CD4-positive, alpha-beta T cell (primary cell): ENCODE measurements at regions of chr17 and their contacts with region 1.

Region 1: GRCh38 chr17:77331301-77331864 is 190.6 kb downstream of the SEC14L1 start:
- DNase-seq: peak; percentile 92 to 99 (median 98)
- ATAC-seq: peak; percentile 84
- H3K4me3 ChIP-seq: peak overlapping the region; percentile 51
- H3K4me3 Mint-ChIP-seq: peak overlapping the region; percentile 90
- H3K27ac ChIP-seq: peak overlapping the region; percentile 47 to 55
- H3K27ac Mint-ChIP-seq: peak overlapping the region; percentile 88
- H3K4me1 ChIP-seq: peaks cover 52% of the 10 kb centered on the region
- H3K4me1 Mint-ChIP-seq: peaks cover 59% of the 10 kb centered on the region
- H3K27me3 ChIP-seq: no peaks in the 10 kb centered on the region
- H3K27me3 Mint-ChIP-seq: no peaks in the 10 kb centered on the region
- CTCF ChIP-seq: peak; percentile 92

Region 2: DNA sequence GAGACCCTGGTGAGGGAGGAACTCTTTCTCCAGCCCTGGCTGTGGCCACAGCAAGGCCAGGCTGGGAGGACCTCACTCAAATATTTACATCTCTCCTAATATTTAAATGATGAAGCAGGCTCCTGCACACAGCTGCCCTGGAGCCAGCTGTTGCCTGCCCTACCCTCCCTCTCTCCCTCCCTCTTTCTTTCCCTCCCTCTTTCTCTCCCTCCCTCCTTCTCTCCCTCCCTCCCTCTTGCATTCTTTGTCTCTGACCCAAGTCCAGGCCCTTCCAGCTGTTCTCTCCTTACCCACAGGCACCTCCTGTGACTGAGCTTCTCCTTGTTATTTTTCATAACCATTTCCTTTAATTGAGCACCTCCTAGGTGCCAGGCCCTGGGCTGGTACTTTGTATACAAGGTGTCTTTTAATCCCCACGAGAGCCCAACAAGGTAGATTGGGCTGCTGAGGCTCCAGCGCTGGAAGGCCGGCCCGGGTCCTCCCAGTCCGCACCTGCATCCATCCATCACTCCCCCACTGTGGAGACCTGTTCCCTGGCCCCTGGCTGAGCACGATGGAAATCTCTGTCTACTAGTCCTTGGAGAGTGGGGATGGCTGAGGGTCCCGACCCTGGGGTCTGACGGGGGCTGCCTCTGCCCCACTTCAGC is 51.7 kb after region 1 on chr17:
- CTCF ChIA-PET with region 1: interaction called, 40 read pairs
- POLR2A ChIA-PET with region 1: interaction called, 91 read pairs
- intact Hi-C with region 1: no loop called
- DNase-seq: no peak
- ATAC-seq: peak; percentile 9
- H3K4me3 ChIP-seq: peak overlapping the region; percentile 41
- H3K4me3 Mint-ChIP-seq: peak overlapping the region; percentile 50
- H3K27ac ChIP-seq: peak overlapping the region in 1 of 2 donors; percentile 32
- H3K27ac Mint-ChIP-seq: peak overlapping the region; percentile 93
- H3K4me1 ChIP-seq: peaks cover 100% of the 10 kb centered on the region
- H3K4me1 Mint-ChIP-seq: peaks cover 93% of the 10 kb centered on the region
- H3K27me3 ChIP-seq: no peaks in the 10 kb centered on the region
- H3K27me3 Mint-ChIP-seq: no peaks in the 10 kb centered on the region
- CTCF ChIP-seq: no peak

Region 3: DNA sequence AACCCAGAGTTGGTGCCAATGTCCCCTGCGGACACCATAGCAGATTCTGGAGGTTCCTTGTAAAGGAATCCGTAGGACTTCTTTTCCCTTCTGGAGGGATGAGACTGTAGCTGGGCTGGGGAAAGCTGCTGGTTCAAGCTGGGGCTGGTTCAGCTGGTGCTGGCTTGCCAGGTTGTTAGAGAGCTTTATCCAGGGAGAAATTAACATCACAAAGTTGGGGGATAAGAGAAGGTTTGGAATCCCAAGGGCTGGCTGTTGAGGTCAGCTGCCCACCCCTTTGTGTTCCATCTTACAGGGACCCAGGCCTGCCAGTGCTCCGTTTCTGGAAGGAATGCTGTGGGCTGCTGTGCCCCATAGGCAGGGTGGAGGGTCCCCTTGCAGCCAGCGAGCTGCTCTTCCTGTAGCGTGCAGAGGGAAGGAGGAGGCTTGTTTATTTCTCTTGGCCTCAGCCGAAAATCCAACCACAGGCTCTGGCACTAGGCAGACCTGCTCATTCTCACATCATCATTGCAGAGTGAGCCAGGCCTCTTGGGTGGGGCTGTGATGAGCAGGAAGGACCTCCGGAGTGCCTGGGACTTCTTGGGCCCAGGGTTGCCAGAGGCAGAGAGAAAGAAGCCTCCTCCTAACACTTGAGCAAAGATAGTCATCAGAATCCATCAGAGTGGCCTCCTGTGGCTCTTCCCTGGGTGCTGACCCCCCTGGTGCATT is 60.4 kb after region 1 on chr17:
- CTCF ChIA-PET with region 1: interaction called, 12 read pairs
- POLR2A ChIA-PET with region 1: interaction called, 12 read pairs
- intact Hi-C with region 1: no loop called
- DNase-seq: peak in 10 of 14 experiments; percentile 33 to 76 (median 53)
- ATAC-seq: peak; percentile 41
- H3K4me3 ChIP-seq: peak overlapping the region; percentile 19
- H3K4me3 Mint-ChIP-seq: peak overlapping the region; percentile 65
- H3K27ac ChIP-seq: peak overlapping the region; percentile 31
- H3K27ac Mint-ChIP-seq: peak overlapping the region; percentile 90
- H3K4me1 ChIP-seq: peaks cover 91% of the 10 kb centered on the region
- H3K4me1 Mint-ChIP-seq: peaks cover 88% of the 10 kb centered on the region
- H3K27me3 ChIP-seq: no peaks in the 10 kb centered on the region
- H3K27me3 Mint-ChIP-seq: no peaks in the 10 kb centered on the region
- CTCF ChIP-seq: no peak

Region 4: DNA sequence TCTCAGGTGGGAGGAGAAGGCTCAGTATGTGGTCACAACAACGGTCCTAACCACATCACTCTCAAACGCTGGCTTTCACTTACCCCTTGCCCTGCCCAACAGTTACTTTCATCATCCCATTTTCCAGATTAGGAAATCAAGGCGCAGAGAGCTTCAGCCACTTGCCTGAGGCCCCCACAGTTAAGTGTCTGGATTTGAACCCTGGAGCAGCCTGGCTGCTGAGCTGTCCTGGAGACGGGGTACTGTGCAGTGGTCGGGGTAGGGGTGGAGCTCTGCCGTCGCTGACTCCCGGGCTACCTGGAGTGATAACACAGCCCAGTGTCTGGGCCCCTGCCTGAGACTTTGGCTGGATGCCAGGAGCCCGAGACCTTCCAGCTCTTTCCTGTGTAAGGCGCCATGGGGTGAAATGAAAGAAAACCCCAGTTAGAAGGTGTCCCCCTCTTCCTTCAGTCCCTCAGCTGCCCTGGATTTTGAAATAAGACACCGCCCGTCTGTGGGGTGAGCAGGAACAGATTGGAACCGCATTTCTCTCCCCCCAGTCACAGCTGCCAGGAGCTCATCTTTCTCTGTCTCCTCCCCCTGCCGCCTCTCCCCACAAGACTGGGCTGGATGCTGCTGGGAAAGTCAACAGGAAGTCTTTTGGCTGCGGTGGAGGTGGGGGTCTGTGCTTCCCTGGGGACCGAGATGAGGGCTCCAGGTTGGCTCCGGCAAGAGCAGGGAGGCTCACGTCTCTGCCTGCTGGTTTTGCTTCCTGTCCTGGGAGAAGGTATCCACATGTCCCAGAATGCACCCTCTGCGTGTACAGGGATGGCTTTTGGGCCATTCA is 89.6 kb after region 1 on chr17:
- CTCF ChIA-PET with region 1: interaction called, 5 read pairs
- POLR2A ChIA-PET with region 1: interaction called, 66 read pairs
- intact Hi-C with region 1: no loop called
- DNase-seq: peak; percentile 44 to 82 (median 66)
- ATAC-seq: peak; percentile 69
- H3K4me3 ChIP-seq: peak overlapping the region; percentile 31
- H3K4me3 Mint-ChIP-seq: peak overlapping the region; percentile 83
- H3K27ac ChIP-seq: peak overlapping the region; percentile 61 to 76
- H3K27ac Mint-ChIP-seq: peak overlapping the region; percentile 89
- H3K4me1 ChIP-seq: peaks cover 92% of the 10 kb centered on the region
- H3K4me1 Mint-ChIP-seq: peaks cover 65% of the 10 kb centered on the region
- H3K27me3 ChIP-seq: no peaks in the 10 kb centered on the region
- H3K27me3 Mint-ChIP-seq: no peaks in the 10 kb centered on the region
- CTCF ChIP-seq: no peak

Region 5: GRCh38 chr17:77465358-77466041 is 134.1 kb after region 1 on chr17:
- CTCF ChIA-PET with region 1: interaction called, 8 read pairs
- POLR2A ChIA-PET with region 1: interaction called, 31 read pairs
- intact Hi-C with region 1: no loop called
- DNase-seq: peak; percentile 63 to 91 (median 78)
- ATAC-seq: peak; percentile 93
- H3K4me3 ChIP-seq: peak overlapping the region; percentile 39
- H3K4me3 Mint-ChIP-seq: peak overlapping the region; percentile 85
- H3K27ac ChIP-seq: peak overlapping the region; percentile 58 to 74
- H3K27ac Mint-ChIP-seq: peak overlapping the region; percentile 96
- H3K4me1 ChIP-seq: peaks cover 100% of the 10 kb centered on the region
- H3K4me1 Mint-ChIP-seq: peaks cover 84% of the 10 kb centered on the region
- H3K27me3 ChIP-seq: no peaks in the 10 kb centered on the region
- H3K27me3 Mint-ChIP-seq: no peaks in the 10 kb centered on the region
- CTCF ChIP-seq: no peak

Region 6: GRCh38 chr17:77476931-77477877 is 145.8 kb after region 1 on chr17:
- CTCF ChIA-PET with region 1: interaction called, 9 read pairs
- POLR2A ChIA-PET with region 1: interaction called, 5 read pairs
- intact Hi-C with region 1: loop called in 1 of 2 experiments (anchors 5 kb)
- DNase-seq: peak in 2 of 14 experiments; percentile 47 to 48
- ATAC-seq: peak; percentile 33
- H3K4me3 ChIP-seq: no peak overlapping the region
- H3K4me3 Mint-ChIP-seq: peak overlapping the region; percentile 74
- H3K27ac ChIP-seq: peak overlapping the region; percentile 58 to 75
- H3K27ac Mint-ChIP-seq: peak overlapping the region; percentile 97
- H3K4me1 ChIP-seq: peaks cover 98% of the 10 kb centered on the region
- H3K4me1 Mint-ChIP-seq: peaks cover 79% of the 10 kb centered on the region
- H3K27me3 ChIP-seq: no peaks in the 10 kb centered on the region
- H3K27me3 Mint-ChIP-seq: no peaks in the 10 kb centered on the region
- CTCF ChIP-seq: no peak

Region 7: GRCh38 chr17:77494664-77495435 is 163.5 kb after region 1 on chr17:
- CTCF ChIA-PET with region 1: interaction called, 25 read pairs
- POLR2A ChIA-PET with region 1: interaction called, 12 read pairs
- intact Hi-C with region 1: loop called (anchors 1 kb)
- DNase-seq: peak; percentile 55 to 89 (median 71)
- ATAC-seq: peak; percentile 79
- H3K4me3 ChIP-seq: no peak overlapping the region
- H3K4me3 Mint-ChIP-seq: no peak overlapping the region
- H3K27ac ChIP-seq: peak overlapping the region; percentile 3 to 40
- H3K27ac Mint-ChIP-seq: peak overlapping the region; percentile 71
- H3K4me1 ChIP-seq: peaks cover 57% of the 10 kb centered on the region
- H3K4me1 Mint-ChIP-seq: peaks cover 7% of the 10 kb centered on the region
- H3K27me3 ChIP-seq: no peaks in the 10 kb centered on the region
- H3K27me3 Mint-ChIP-seq: no peaks in the 10 kb centered on the region
- CTCF ChIP-seq: peak; percentile 99